CD14-positive monocyte (primary cell): ENCODE measurements at regions of chr1 and their contacts with region 1.

Region 1: DNA sequence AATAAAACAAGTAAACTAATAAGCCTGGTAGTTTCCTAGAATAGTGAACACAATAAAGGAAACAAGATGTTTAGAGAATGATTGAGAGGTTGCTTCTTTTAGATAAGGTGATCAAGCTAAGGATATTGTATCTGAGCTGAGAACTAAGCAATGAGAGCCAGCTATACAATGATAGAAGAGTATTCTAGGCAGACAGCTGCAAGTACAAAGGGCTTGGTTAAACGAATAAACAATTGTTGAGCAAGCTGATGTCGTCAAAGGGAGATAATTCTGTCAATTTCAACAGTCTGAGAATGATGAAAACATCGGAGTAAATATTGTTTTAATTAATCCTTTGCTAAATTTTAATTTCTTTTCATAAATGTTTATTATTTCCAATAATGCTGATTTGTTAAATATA is 5.5 kb upstream of the FH start:
- DNase-seq: no peak
- H3K4me3 ChIP-seq: no peak overlapping the region
- H3K4me3 Mint-ChIP-seq: no peak overlapping the region
- H3K27ac ChIP-seq: no peak overlapping the region
- H3K27ac Mint-ChIP-seq: no peak overlapping the region
- H3K4me1 ChIP-seq: peaks cover 0 to 5% of the 10 kb centered on the region in 2 donors
- H3K4me1 Mint-ChIP-seq: peaks cover 3% of the 10 kb centered on the region
- H3K27me3 ChIP-seq: peaks cover 3 to 19% of the 10 kb centered on the region in 2 donors
- H3K27me3 Mint-ChIP-seq: peaks cover 16 to 23% (median 22%) of the 10 kb centered on the region in 3 donors
- CTCF ChIP-seq: no peak

Region 2: DNA sequence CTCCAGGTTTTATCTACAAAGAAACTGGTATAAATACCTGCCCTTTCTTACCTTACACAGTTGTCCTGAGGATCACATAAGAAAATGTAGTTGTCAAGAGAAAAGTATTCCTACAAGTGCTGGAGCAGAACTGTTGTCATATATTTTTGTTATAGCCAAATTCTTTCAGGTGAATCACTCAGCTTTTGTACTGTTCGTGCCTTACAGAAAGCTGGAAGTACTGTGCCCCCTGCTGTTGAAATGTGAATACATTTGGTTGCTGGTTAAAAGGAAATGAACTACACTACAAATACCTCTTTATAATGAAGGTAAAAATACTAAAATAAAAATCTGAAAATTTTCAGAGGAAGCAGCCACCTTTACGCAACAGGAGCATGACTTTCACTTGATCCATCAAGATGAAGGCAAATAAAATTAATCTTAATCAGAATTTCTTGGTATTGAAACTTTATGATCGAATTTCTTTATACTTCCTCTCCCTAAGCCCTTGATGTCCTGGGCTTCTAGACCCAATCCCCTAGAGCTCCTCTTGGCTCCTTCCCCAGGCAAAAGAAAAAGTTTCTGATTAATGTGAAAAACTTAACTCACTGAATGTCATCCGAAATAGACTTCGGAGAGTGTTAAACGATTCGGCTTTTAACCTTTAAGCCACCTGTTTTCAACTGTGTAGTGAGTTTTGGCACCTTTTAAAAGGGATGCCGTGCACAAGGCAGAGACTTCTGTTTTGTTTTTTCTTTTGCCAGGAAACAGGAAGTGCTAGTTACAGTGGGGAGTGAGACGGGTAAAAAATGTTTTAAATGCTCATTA is 102.6 kb after region 1 on chr1:
- intact Hi-C with region 1: loop called (anchors 5 kb)
- DNase-seq: peak; percentile 61 to 77 (median 66)
- H3K4me3 ChIP-seq: peak overlapping the region in 2 of 3 experiments; percentile 25 to 47
- H3K4me3 Mint-ChIP-seq: peak overlapping the region; percentile 67 to 81
- H3K27ac ChIP-seq: peak overlapping the region; percentile 33 to 61
- H3K27ac Mint-ChIP-seq: peak overlapping the region; percentile 54 to 89 (median 72)
- H3K4me1 ChIP-seq: peaks cover 9 to 12% of the 10 kb centered on the region in 2 donors
- H3K4me1 Mint-ChIP-seq: peaks cover 12% of the 10 kb centered on the region
- H3K27me3 ChIP-seq: no peaks in the 10 kb centered on the region
- H3K27me3 Mint-ChIP-seq: peaks cover 0 to 2% (median 0%) of the 10 kb centered on the region in 3 donors
- CTCF ChIP-seq: peak; percentile 76